ENCODE measurements at regions of chr21 and their contacts with region 1.

Region 1: DNA sequence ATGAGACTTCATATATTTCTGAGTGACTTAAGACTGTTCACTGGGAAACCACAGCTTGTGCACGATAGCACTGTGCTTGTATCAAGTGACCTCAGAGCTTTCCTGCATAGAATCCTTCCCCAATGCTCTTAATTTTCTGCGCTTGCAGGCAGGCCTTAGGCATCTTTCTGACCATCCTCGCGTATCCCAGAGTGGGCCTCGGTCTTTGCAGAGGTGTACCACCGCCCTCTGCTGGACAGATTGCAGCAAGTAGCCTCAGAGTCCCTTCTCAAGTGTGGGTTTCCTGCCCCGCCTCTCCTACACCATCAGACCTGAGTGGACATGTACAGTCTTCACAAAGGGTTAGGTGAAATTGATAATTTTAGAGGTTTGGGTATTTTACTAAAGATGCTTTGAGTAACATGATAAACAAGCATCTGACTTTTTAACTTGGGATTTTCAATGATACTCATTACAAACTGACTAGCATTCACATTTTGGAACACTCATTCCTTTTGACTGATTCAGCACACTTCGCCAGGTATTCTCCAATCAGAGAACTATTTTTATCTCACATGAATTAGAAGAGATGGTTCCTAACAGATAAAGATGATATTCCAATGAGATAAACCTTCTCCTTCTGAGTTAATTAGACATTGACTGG is 246.5 kb upstream of the USP25 start:
- DNase-seq: peak; percentile 54
- ATAC-seq: peak; percentile 99
- H3K4me3 Mint-ChIP-seq: no peak overlapping the region
- H3K27ac Mint-ChIP-seq: no peak overlapping the region
- H3K4me1 Mint-ChIP-seq: peaks cover 7% of the 10 kb centered on the region
- H3K27me3 Mint-ChIP-seq: no peaks in the 10 kb centered on the region
- CTCF ChIP-seq: no peak

Region 2: DNA sequence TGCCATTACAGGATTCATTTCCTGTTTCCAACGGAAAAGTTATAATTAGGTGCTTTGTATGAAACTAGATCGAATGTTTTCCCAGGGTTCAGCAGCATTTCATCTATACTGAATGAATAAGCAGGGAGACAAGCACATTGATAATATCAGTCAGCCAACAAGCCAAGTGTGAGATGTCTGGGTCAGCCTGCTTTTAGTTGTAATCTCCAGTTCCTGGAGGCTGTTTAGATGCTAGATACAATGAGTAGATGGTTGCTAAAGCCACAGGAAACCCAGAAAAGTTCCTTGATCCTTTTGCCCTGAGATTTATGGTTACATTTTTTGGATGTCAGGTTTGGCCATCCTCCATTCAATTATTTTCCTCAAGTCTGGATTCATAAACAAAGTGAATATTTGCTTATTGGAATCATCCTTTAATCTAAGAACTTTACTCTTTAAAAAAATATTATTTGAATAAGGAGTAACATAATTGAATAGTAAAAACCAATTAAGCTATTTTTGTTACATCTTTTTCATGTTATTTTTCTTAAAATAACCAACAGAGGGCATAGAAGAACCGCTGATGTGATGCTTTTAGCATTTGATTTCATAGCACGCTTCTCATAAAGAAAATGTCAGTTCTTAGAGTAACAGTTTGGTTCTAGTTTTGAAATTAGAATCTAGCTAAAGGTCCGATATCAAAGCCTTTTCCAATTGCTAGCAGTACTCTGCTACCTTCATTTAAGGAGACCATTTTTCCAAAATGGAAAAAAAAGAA is 1176.9 kb before region 1 on chr21:
- CTCF ChIA-PET with region 1: interaction called, 3 read pairs
- POLR2A ChIA-PET with region 1: no interaction called
- intact Hi-C with region 1: loop called (anchors 2 kb)
- DNase-seq: no peak
- ATAC-seq: no peak
- H3K4me3 Mint-ChIP-seq: no peak overlapping the region
- H3K27ac Mint-ChIP-seq: no peak overlapping the region
- H3K4me1 Mint-ChIP-seq: peaks cover 4% of the 10 kb centered on the region
- H3K27me3 Mint-ChIP-seq: peaks cover 2% of the 10 kb centered on the region
- CTCF ChIP-seq: no peak

Region 3: DNA sequence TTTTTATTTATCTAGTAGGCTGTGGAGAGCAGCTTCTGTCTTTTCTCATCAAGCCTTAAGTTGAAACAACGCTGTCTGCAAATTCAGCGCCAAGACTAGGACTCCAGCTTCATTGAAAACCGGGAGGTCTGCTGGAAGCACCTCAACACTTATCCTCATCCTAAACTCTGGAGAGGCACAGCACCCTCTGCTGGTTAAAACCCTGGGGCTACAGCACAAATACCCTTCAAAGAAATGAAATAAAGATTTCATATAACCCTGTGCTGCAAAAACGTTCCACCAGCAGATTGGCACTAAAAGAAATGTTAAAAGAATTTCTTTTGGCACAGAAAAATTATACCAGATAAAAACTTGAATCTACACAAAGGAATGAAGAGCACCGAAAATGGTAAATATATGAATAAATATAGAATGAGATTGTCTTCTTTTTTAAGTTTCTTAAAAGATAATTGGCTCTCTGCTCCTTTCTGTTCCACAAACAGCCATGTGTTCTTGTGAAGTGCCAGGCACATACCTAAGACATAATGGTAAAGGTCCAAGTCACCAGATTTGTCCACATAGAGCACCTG is 709.4 kb before region 1 on chr21:
- CTCF ChIA-PET with region 1: interaction called, 6 read pairs
- POLR2A ChIA-PET with region 1: no interaction called
- intact Hi-C with region 1: loop called (anchors 1 kb)
- DNase-seq: peak; percentile 28
- ATAC-seq: peak; percentile 49
- H3K4me3 Mint-ChIP-seq: no peak overlapping the region
- H3K27ac Mint-ChIP-seq: no peak overlapping the region
- H3K4me1 Mint-ChIP-seq: peaks cover 9% of the 10 kb centered on the region
- H3K27me3 Mint-ChIP-seq: no peaks in the 10 kb centered on the region
- CTCF ChIP-seq: peak; percentile 26

Region 4: GRCh38 chr21:15128267-15128666 is 355.0 kb before region 1 on chr21:
- CTCF ChIA-PET with region 1: interaction called, 3 read pairs
- POLR2A ChIA-PET with region 1: no interaction called
- intact Hi-C with region 1: loop called (anchors 1 kb)
- DNase-seq: no peak
- ATAC-seq: peak; percentile 68
- H3K4me3 Mint-ChIP-seq: peak overlapping the region; percentile 50
- H3K27ac Mint-ChIP-seq: peak overlapping the region; percentile 48
- H3K4me1 Mint-ChIP-seq: peaks cover 20% of the 10 kb centered on the region
- H3K27me3 Mint-ChIP-seq: peaks cover under 1% of the 10 kb centered on the region
- CTCF ChIP-seq: no peak

Measured in activated B cell treated with CpG ODN at 0.5 μM for 24 hours (primary cell).